ENCODE measurements at regions of chr12 and their contacts with region 1.

Region 1: DNA sequence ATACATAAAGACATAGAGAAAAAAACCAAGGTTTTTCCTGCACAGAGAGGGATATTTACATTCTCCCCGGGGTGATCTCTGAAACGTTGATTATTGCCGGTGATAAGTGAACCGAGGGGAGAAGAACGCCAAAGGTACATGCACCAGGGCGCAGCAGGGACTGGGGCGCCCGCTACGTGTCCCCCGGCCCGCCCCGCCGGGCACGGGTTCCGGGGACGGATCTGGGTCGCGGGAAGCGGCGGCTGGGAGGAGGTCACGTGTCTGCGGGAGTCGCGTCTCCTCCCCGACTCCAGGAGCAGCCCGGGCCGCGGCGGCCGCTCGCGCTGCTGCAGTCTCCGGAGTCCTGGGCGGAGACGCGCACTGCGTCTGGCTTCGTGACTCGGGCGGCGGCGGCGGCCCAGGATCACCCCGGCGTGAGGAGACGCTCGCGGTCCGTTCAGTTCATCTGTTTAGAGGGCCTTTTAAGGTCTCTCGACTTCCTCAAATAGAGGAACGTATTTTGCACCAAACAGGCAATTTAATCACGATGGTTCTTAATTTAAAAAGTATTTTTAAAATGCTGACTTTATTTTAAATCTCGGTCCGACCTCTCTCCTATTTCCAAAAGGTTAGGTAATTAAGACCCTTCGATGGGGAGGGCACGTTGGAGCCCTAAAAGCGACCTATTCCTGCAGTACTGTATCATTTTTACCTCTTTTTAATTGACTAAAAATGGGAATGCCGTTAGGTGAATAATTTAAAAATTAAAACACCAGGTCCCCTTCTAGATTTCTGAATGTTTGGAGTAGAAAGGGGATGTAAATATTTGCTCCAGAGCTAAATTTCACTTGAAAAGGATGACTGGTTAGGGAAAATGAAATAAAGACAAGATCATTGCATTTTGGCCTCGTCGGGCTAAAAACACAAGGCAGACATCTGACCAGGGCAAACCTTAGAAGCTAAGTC is 1.8 kb upstream of the BHLHE41 start:
- DNase-seq: peak; percentile 77
- H3K4me3 Mint-ChIP-seq: peak overlapping the region; percentile 94
- H3K27ac Mint-ChIP-seq: peak overlapping the region; percentile 63
- H3K4me1 Mint-ChIP-seq: peaks cover 24% of the 10 kb centered on the region
- H3K27me3 Mint-ChIP-seq: peaks cover 10% of the 10 kb centered on the region
- CTCF ChIP-seq: no peak

Region 2: GRCh38 chr12:26153421-26154154 is 27.0 kb after region 1 on chr12:
- CTCF ChIA-PET with region 1: no interaction called
- POLR2A ChIA-PET with region 1: interaction called, 6 read pairs
- intact Hi-C with region 1: loop called (anchors 1 kb)
- DNase-seq: peak; percentile 75
- H3K4me3 Mint-ChIP-seq: no peak overlapping the region
- H3K27ac Mint-ChIP-seq: peak overlapping the region; percentile 18
- H3K4me1 Mint-ChIP-seq: peaks cover 11% of the 10 kb centered on the region
- H3K27me3 Mint-ChIP-seq: no peaks in the 10 kb centered on the region
- CTCF ChIP-seq: peak; percentile 5

Region 3: DNA sequence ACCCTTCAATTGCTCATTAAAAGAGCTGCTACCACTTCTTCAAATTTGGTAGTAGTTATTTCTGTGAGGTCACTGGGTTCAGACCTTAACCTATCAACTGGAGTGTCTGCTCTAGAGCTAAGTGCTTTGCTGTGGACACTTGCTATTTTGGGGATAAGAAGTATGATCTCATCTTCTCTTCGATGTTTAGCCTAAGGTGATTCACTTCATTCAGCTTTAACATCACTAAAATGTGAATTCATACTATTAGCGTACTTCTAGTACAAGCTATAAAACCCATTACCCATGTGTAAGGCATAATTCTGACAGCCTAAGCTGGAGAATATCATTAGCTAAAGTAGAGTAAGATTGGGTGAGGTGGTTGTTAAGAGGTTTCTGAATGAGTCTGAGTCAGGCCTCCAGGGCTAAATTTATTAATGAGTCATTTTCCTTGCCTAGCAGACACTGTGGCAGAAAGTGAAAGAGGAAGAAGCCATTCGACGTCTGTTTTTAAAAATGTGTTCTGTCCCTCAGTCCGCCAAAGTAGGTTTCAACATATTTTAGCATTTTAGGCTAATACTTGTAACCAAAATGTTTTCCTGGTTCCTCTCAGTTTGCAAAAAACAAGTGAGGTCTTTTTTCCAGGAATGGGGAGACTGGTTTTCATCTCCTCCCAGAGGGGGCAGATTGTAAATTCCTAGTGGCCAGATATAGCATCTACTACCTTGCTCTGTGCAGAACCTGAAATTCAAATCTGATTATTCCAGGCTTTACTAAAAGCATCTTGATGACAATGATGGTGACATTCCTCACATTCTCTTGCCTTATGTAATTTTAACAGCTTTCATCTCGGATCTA is 172.4 kb after region 1 on chr12:
- CTCF ChIA-PET with region 1: interaction called, 5 read pairs
- POLR2A ChIA-PET with region 1: interaction called, 3 read pairs
- intact Hi-C with region 1: loop called (anchors 1 kb)
- DNase-seq: peak; percentile 82
- H3K4me3 Mint-ChIP-seq: peak overlapping the region; percentile 61
- H3K27ac Mint-ChIP-seq: peak overlapping the region; percentile 76
- H3K4me1 Mint-ChIP-seq: peaks cover 8% of the 10 kb centered on the region
- H3K27me3 Mint-ChIP-seq: no peaks in the 10 kb centered on the region
- CTCF ChIP-seq: peak; percentile 36

Region 4: DNA sequence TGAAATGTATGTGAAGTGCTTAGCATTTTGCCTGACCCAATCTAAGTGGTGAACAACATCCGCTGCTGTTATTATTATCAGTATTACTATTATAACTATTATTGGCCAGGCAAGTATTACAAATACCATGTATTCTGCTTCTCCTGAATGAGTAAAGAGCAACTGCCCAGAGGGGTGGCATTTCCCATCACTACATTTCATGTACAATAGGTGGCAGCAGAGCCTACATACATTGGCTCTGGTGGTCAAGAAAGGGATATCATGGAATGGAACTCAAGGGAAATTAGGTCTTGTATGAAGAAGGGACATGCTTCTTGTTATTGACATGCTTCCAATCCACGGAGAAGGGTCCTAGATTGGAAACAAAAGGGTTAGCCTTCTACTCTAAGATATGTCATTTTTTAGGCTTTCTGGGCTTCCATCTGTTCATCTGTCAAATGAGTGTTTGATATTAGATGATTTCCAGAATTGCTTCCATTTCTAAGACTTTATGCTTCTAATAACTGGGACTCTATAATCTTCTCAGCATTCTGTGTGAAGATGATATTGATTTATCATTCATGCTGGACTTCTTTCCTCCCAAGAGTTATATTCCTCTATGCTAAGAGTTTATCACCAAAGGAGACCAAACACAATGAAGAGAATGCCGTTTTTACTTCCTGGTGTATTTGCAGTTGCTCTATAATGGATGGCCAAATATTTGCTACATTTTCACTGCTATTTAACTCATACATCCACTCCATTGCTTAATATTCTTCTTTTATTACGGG is 307.9 kb after region 1 on chr12:
- CTCF ChIA-PET with region 1: interaction called, 6 read pairs
- POLR2A ChIA-PET with region 1: interaction called, 4 read pairs
- intact Hi-C with region 1: loop called (anchors 1 kb)
- DNase-seq: peak; percentile 72
- H3K4me3 Mint-ChIP-seq: no peak overlapping the region
- H3K27ac Mint-ChIP-seq: no peak overlapping the region
- H3K4me1 Mint-ChIP-seq: no peaks in the 10 kb centered on the region
- H3K27me3 Mint-ChIP-seq: no peaks in the 10 kb centered on the region
- CTCF ChIP-seq: peak; percentile 80

Region 5: GRCh38 chr12:26651566-26652188 is 525.1 kb after region 1 on chr12:
- CTCF ChIA-PET with region 1: interaction called, 27 read pairs
- POLR2A ChIA-PET with region 1: no interaction called
- intact Hi-C with region 1: loop called (anchors 1 kb)
- DNase-seq: peak; percentile 75
- H3K4me3 Mint-ChIP-seq: no peak overlapping the region
- H3K27ac Mint-ChIP-seq: no peak overlapping the region
- H3K4me1 Mint-ChIP-seq: peaks cover 16% of the 10 kb centered on the region
- H3K27me3 Mint-ChIP-seq: no peaks in the 10 kb centered on the region
- CTCF ChIP-seq: peak; percentile 89

Measured in MCF 10A (cell line).